ENCODE measurements at regions of chr10 and their contacts with region 1.

Region 1: GRCh38 chr10:70880077-70880534 is 8.3 kb downstream of the PCBD1 start:
- DNase-seq: peak; percentile 95
- ATAC-seq: peak; percentile 91
- H3K4me3 ChIP-seq: no peak overlapping the region
- H3K27ac ChIP-seq: no peak overlapping the region
- H3K4me1 ChIP-seq: peaks cover 16% of the 10 kb centered on the region
- H3K27me3 ChIP-seq: no peaks in the 10 kb centered on the region
- CTCF ChIP-seq: peak; percentile 100

Region 2: DNA sequence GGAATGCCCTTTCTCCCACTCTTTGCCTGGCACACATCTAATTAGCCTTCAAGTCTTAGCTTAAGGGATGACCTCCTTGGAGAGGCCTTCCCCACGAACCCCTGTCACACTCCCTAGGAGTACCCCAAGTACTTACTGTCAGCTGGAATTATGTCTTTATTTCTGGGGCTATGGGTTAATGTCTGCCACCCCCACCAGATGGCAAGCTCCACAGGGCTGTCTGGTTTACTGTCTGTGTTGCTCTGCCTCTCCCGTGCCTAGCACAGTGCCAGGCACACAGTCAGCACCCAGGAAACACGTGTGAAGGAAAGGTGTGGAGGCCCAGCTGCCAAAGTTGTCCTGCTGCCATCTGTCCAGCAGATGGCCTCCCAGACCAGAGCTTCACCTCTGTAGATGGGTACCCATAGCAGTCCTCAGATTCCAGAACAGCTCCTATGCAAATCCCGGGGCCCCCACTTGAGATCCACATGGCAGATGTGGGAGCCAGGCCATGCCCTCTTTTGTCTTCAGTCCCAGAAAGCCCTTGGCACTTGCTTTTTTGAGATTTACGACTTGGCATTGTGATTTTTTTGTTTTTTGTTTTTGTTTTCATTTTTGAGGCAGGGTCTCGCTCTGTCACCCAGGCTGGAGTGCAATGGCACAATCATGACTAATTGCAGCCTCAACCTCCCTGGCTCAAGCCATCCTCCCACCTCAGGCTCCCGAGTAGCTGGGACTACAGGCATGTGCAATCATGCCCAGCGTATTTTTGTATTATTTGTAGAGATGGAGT is 418.7 kb before region 1 on chr10:
- CTCF ChIA-PET with region 1: no interaction called
- POLR2A ChIA-PET with region 1: no interaction called
- intact Hi-C with region 1: loop called (anchors 2 kb)
- DNase-seq: peak; percentile 89
- ATAC-seq: peak; percentile 65
- H3K4me3 ChIP-seq: no peak overlapping the region
- H3K27ac ChIP-seq: no peak overlapping the region
- H3K4me1 ChIP-seq: peaks cover 27% of the 10 kb centered on the region
- H3K27me3 ChIP-seq: 0 out of 2 replicates have a peak, but pooled peaks cover 1% of the 10 kb centered on the region
- CTCF ChIP-seq: peak; percentile 99

Region 3: DNA sequence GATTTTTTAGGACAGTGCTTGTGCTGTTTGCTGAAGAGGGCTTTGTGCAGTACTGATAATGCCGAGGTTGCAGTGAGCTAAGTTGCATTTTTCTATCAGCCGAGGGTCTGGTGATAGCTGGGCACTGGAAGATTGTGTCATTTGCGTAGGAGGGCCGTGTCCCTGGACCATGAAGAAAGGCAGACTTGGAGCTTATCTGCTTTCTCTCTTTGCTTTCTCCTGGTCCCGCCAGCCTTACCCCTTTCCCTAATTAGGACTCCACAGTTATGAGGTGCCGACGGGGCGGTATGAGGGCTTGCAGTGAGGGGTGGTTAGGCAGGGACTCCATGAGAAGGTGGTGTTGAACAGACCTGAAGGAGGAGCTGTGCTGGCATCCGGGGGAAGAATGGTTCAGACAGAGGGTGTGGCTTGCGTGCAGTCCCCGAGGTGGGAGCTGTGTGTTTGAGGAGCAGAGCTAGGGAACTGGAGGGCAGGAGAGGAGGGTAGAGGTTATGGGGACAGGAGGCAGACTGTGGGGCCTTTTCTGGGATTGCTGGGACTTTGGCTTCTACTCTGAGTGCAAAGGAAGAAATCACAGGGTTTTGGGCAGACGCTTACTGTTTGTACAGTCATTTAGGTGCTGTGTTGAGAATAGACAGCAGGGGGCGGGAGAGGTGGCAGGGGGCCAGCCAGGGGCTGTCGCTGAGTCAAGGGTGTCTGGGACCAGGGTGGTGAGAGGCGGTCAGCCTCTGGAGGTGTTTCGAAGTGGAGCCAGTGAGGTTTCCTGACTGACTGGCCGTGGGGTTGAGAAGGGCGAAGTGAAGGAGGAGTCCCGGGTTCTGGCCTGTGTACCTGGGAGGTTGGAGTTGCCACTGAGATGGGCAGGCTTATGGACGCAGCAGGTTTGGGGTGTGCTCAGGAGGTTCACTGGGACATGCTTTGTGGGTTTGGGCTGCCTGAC is 321.0 kb before region 1 on chr10:
- CTCF ChIA-PET with region 1: no interaction called
- POLR2A ChIA-PET with region 1: no interaction called
- intact Hi-C with region 1: loop called (anchors 2 kb)
- DNase-seq: peak; percentile 91
- ATAC-seq: peak; percentile 88
- H3K4me3 ChIP-seq: peak overlapping the region; percentile 56
- H3K27ac ChIP-seq: no peak overlapping the region
- H3K4me1 ChIP-seq: no peaks in the 10 kb centered on the region
- H3K27me3 ChIP-seq: no peaks in the 10 kb centered on the region
- CTCF ChIP-seq: peak; percentile 96

Region 4: DNA sequence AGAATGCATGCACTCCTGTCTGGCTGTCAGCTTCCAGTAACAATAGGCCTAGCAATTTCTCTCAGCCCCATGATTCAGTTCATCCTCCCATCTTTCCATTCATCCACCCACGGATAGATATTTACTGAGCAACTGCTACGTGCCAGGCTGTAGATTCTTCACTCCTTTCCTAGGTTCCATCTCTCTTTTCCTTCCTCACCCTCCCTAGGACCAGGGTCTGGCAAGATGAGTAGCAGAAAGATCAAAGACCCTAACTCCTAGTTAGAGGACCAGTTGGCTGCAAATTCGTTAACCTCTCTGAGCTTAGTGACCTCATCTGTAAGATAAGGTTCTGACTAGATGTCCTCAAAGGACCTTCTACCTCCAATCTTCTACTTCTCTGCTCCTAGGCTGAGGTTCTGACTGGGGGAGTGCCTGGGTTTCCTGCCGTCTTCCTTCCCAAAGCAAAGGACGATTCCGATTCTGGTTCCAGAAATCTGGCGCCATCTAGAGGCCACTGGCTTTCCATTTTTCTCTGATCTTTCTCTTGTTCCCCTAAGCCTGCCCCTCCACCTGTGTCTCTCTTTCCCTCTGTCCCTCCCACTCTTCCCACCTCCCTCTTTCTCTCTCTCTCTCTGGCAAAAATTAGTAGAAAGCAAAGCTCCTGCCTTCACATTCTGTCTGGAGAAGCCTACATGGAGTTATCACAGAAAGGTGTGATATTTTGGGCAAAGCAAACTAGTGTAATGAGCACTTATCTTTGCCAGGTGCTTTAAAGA is 121.2 kb before region 1 on chr10:
- CTCF ChIA-PET with region 1: interaction called, 3 read pairs
- POLR2A ChIA-PET with region 1: no interaction called
- intact Hi-C with region 1: loop called (anchors 1 kb)
- DNase-seq: peak; percentile 97
- ATAC-seq: peak; percentile 68
- H3K4me3 ChIP-seq: no peak overlapping the region
- H3K27ac ChIP-seq: no peak overlapping the region
- H3K4me1 ChIP-seq: peaks cover 8% of the 10 kb centered on the region
- H3K27me3 ChIP-seq: no peaks in the 10 kb centered on the region
- CTCF ChIP-seq: peak; percentile 92

Region 5: GRCh38 chr10:70827086-70827757 is 52.9 kb before region 1 on chr10:
- CTCF ChIA-PET with region 1: no interaction called
- POLR2A ChIA-PET with region 1: no interaction called
- intact Hi-C with region 1: loop called (anchors 1 kb)
- DNase-seq: peak; percentile 96
- ATAC-seq: peak; percentile 70
- H3K4me3 ChIP-seq: peak overlapping the region; percentile 29
- H3K27ac ChIP-seq: peak overlapping the region; percentile 84
- H3K4me1 ChIP-seq: peaks cover 67% of the 10 kb centered on the region
- H3K27me3 ChIP-seq: no peaks in the 10 kb centered on the region
- CTCF ChIP-seq: no peak

Region 6: GRCh38 chr10:70893227-70894006 is 13.3 kb after region 1 on chr10:
- CTCF ChIA-PET with region 1: no interaction called
- POLR2A ChIA-PET with region 1: no interaction called
- intact Hi-C with region 1: no loop called
- DNase-seq: no peak
- ATAC-seq: no peak
- H3K4me3 ChIP-seq: no peak overlapping the region
- H3K27ac ChIP-seq: no peak overlapping the region
- H3K4me1 ChIP-seq: peaks cover 20% of the 10 kb centered on the region
- H3K27me3 ChIP-seq: no peaks in the 10 kb centered on the region
- CTCF ChIP-seq: no peak

Region 7: DNA sequence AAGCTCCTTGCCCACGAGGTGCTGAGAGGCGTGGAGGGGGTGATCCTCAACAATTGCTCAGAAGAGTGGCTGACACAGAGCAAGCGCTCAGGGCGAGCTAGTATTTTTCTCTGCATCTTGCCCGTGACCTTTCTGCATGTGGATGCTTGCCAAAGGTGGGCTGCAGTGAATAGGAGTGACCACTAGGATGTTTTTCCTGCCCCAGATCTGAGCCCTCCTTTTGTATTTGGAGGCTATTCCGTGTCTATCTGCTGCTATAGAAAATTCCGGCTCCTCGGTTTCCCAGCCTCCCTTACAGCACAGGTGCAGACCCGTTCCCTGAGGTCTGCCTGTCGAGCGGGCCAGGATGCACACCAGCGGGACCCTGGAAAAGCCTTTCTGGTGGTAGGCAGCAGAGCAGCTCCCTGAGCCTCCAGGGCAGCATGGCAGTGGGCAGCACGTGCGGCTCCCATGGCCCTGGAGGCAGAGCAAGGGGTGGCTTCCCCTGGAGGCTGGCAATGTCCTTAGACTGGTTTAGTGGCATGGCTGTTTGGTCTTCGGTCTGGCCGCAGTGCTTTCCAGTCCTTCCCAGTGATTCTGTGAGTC is 153.4 kb after region 1 on chr10:
- CTCF ChIA-PET with region 1: no interaction called
- POLR2A ChIA-PET with region 1: no interaction called
- intact Hi-C with region 1: no loop called
- DNase-seq: no peak
- ATAC-seq: no peak
- H3K4me3 ChIP-seq: no peak overlapping the region
- H3K27ac ChIP-seq: no peak overlapping the region
- H3K4me1 ChIP-seq: 0 out of 2 replicates have a peak, but pooled peaks cover 5% of the 10 kb centered on the region
- H3K27me3 ChIP-seq: peaks cover 19% of the 10 kb centered on the region; the same call in 1 of the 2 replicates
- CTCF ChIP-seq: 0 out of 2 replicates have a peak, but pooled peaks have one; percentile 20